SK-N-SH (cell line): ENCODE measurements at regions of chr5 and their contacts with region 1.

Region 1: GRCh38 chr5:133111299-133111698 is 59.5 kb downstream of the HSPA4 start:
- DNase-seq: peak; percentile 79
- H3K4me3 ChIP-seq: no peak overlapping the region; a peak in 1 of 4 replicates
- H3K27ac ChIP-seq: no peak overlapping the region
- H3K4me1 ChIP-seq: peaks cover 0 to 24% of the 10 kb centered on the region in 2 experiments; a peak in 1 of 4 replicates
- H3K27me3 ChIP-seq: no peaks in the 10 kb centered on the region
- CTCF ChIP-seq: peak; percentile 97
- EP300 ChIP-seq: no peak
- RAD21 ChIP-seq: peak; percentile 99

Region 2: DNA sequence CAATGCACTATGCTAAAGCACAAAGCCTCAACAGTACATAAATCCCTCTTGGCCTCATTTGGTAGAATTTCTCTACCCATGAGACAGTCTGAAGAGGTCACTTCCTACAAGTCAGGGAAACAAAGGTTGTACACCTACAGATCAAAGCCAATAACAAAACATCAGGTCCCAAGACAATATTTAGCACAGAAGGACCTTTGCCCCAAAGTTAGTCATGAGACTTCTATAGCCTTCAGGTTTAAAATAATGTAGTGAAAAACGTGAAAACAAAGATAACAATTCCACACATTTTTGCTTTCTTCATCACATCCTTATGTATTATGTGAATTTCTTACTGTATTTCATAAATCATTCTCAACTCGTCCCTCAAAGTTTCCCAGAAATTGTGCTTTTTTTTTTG is 163.6 kb before region 1 on chr5:
- CTCF ChIA-PET with region 1: no interaction called
- POLR2A ChIA-PET with region 1: no interaction called
- DNase-seq: no peak
- H3K4me3 ChIP-seq: no peak overlapping the region; a peak in 1 of 4 replicates
- H3K27ac ChIP-seq: peak overlapping the region in 1 of 2 experiments; percentile 85; a peak in 2 of 4 replicates
- H3K4me1 ChIP-seq: peaks cover 0 to 14% of the 10 kb centered on the region in 2 experiments; a peak in 2 of 4 replicates
- H3K27me3 ChIP-seq: no peaks in the 10 kb centered on the region
- CTCF ChIP-seq: no peak
- EP300 ChIP-seq: no peak
- RAD21 ChIP-seq: no peak

Region 3: GRCh38 chr5:133123297-133123696 is 12.0 kb after region 1 on chr5:
- CTCF ChIA-PET with region 1: interaction called, 26 read pairs
- POLR2A ChIA-PET with region 1: no interaction called
- DNase-seq: no peak
- H3K4me3 ChIP-seq: no peak overlapping the region
- H3K27ac ChIP-seq: no peak overlapping the region
- H3K4me1 ChIP-seq: no peaks in the 10 kb centered on the region
- H3K27me3 ChIP-seq: no peaks in the 10 kb centered on the region; the same call in 1 of the 2 replicates
- CTCF ChIP-seq: no peak
- EP300 ChIP-seq: no peak
- RAD21 ChIP-seq: no peak

Region 4: GRCh38 chr5:133192716-133193115 is 81.4 kb after region 1 on chr5:
- CTCF ChIA-PET with region 1: interaction called, 16 read pairs
- POLR2A ChIA-PET with region 1: no interaction called
- DNase-seq: no peak
- H3K4me3 ChIP-seq: no peak overlapping the region
- H3K27ac ChIP-seq: no peak overlapping the region
- H3K4me1 ChIP-seq: no peaks in the 10 kb centered on the region
- H3K27me3 ChIP-seq: no peaks in the 10 kb centered on the region; the same call in 1 of the 2 replicates
- CTCF ChIP-seq: no peak
- EP300 ChIP-seq: no peak
- RAD21 ChIP-seq: no peak

Region 5: GRCh38 chr5:133247881-133248624 is 136.8 kb after region 1 on chr5:
- CTCF ChIA-PET with region 1: interaction called, 117 read pairs
- POLR2A ChIA-PET with region 1: interaction called, 3 read pairs
- DNase-seq: peak; percentile 73
- H3K4me3 ChIP-seq: no peak overlapping the region
- H3K27ac ChIP-seq: no peak overlapping the region
- H3K4me1 ChIP-seq: peaks cover 0 to 26% of the 10 kb centered on the region in 2 experiments; a peak in 1 of 4 replicates
- H3K27me3 ChIP-seq: no peaks in the 10 kb centered on the region
- CTCF ChIP-seq: peak; percentile 61
- EP300 ChIP-seq: no peak
- RAD21 ChIP-seq: peak; percentile 76

Region 6: GRCh38 chr5:133287500-133287899 is 176.2 kb after region 1 on chr5:
- CTCF ChIA-PET with region 1: interaction called, 155 read pairs
- POLR2A ChIA-PET with region 1: interaction called, 7 read pairs
- DNase-seq: peak; percentile 79
- H3K4me3 ChIP-seq: no peak overlapping the region
- H3K27ac ChIP-seq: no peak overlapping the region
- H3K4me1 ChIP-seq: no peaks in the 10 kb centered on the region; a peak in 1 of 4 replicates
- H3K27me3 ChIP-seq: no peaks in the 10 kb centered on the region
- CTCF ChIP-seq: peak; percentile 69
- EP300 ChIP-seq: no peak
- RAD21 ChIP-seq: peak; percentile 86

Region 7: GRCh38 chr5:133552931-133553525 is 441.7 kb after region 1 on chr5:
- CTCF ChIA-PET with region 1: no interaction called
- POLR2A ChIA-PET with region 1: no interaction called
- DNase-seq: peak; percentile 58
- H3K4me3 ChIP-seq: no peak overlapping the region; a peak in 1 of 4 replicates
- H3K27ac ChIP-seq: no peak overlapping the region
- H3K4me1 ChIP-seq: no peaks in the 10 kb centered on the region
- H3K27me3 ChIP-seq: no peaks in the 10 kb centered on the region
- CTCF ChIP-seq: peak; percentile 66
- EP300 ChIP-seq: no peak
- RAD21 ChIP-seq: peak; percentile 68